Endothelial cell of umbilical vein (primary cell): ENCODE measurements at regions of chr9 and their contacts with region 1.

Region 1: GRCh38 chr9:90914868-90915483 is 113.4 kb downstream of the SYK start:
- DNase-seq: peak; percentile 62
- H3K4me3 ChIP-seq: no peak overlapping the region
- H3K27ac ChIP-seq: no peak overlapping the region
- H3K4me1 ChIP-seq: no peaks in the 10 kb centered on the region
- H3K27me3 ChIP-seq: peaks cover 0 to 1% of the 10 kb centered on the region in 2 experiments
- CTCF ChIP-seq: peak; percentile 80 to 89
- POLR2A ChIP-seq: no peak

Region 2: DNA sequence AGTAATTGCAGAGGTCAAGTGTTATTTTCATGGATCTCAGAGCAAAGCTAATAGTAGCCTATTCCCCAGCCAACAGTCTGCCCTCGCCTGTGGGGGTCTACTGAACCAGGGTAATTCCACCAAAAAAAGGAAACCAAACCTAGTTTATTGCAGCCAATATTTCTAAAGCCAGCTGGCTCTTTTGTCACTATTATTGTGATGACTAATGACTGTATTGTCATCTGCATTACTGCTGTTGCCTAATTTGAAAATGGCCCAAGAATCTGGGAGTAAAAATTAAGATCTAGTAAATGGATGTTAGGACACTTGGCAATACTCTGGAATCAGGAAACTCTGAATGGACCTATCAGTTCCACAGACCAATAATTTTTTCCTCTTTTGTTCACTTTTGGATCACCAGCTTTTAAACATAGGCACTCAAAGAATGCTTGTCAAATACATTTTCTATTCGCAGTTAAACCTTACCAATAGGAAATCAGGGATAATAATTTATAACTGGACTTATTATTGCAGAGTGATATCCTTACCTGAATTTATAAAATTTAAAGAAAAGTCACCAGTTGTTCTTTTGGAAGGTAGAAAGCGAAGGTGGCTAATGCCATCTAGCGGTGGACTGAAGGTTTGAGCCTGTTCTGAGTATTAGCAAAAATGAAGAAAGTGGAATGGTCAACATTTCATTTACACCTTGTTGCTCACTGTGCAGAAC is 44.2 kb before region 1 on chr9:
- CTCF ChIA-PET with region 1: no interaction called
- POLR2A ChIA-PET with region 1: no interaction called
- dilution Hi-C with region 1: no loop called
- intact Hi-C with region 1: no loop called
- DNase-seq: peak; percentile 32
- H3K4me3 ChIP-seq: no peak overlapping the region
- H3K27ac ChIP-seq: no peak overlapping the region
- H3K4me1 ChIP-seq: no peaks in the 10 kb centered on the region
- H3K27me3 ChIP-seq: no peaks in the 10 kb centered on the region
- CTCF ChIP-seq: peak; percentile 63 to 65
- POLR2A ChIP-seq: no peak

Region 3: DNA sequence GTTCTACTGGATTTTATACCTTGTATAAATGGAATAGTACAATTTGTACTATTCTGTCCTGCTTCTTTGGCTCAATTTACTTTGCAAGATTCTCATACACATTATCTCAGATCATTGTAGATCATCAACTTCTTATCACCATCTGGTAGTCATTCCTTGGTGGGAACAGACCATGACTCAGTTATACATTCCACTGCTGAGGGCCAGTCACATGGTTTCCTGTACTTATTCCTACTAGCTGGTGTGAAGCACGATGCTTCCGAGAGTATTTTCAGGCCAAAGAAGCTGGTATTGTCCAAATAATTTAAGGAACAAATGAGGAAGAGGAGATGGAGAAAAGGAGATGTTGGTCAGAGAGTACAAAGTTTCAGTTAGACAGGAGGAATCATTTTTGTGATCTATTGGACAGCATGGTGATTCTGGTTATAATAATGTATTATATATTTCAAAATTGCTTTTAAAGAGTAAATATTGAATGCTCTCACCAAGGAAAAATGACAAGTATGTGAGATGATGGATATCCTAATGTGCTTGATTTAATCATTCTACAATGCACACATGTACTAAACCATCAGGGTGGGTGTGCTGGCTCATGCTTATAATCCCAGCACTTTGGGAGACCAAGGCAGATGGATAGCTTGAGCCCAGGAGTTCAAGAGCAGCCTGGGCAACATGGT is 10.7 kb after region 1 on chr9:
- CTCF ChIA-PET with region 1: interaction called, 19 read pairs
- POLR2A ChIA-PET with region 1: no interaction called
- dilution Hi-C with region 1: no loop called
- intact Hi-C with region 1: no loop called
- DNase-seq: peak; percentile 20
- H3K4me3 ChIP-seq: no peak overlapping the region
- H3K27ac ChIP-seq: no peak overlapping the region
- H3K4me1 ChIP-seq: peaks cover 2% of the 10 kb centered on the region
- H3K27me3 ChIP-seq: no peaks in the 10 kb centered on the region
- CTCF ChIP-seq: no peak
- POLR2A ChIP-seq: no peak

Region 4: DNA sequence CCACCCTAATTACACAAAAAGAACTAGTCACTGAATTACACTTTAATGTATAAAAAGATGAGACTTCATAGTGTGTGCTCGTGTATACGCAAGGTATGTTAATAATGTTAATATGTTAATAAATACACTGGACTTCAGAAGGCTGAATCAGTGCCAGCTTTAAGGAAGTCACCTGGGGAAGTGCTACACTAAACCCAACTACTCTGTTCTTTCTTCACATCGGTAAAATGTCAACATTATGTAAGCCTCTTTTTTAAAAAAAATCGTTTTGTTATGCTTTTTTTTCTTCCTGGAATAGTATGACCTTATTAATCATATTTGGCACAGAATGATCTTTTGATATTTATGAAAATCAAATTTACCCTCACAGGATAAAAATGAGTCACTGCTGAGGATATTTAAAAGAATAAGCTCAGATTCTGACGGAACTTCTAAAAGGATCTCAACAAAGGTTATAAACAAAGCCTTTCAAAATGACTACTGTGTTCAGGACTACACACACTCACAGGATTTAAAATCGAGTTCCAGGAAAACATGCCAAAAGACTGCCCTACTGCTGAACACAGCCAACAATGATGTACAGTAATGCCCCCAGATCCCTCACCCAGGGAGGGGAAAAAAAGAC is 370.9 kb after region 1 on chr9:
- CTCF ChIA-PET with region 1: interaction called, 4 read pairs
- POLR2A ChIA-PET with region 1: no interaction called
- dilution Hi-C with region 1: no loop called
- intact Hi-C with region 1: loop called (anchors 1 kb)
- DNase-seq: peak; percentile 77
- H3K4me3 ChIP-seq: no peak overlapping the region
- H3K27ac ChIP-seq: peak overlapping the region; percentile 63
- H3K4me1 ChIP-seq: peaks cover 12% of the 10 kb centered on the region
- H3K27me3 ChIP-seq: no peaks in the 10 kb centered on the region
- CTCF ChIP-seq: no peak
- POLR2A ChIP-seq: no peak

Region 5: DNA sequence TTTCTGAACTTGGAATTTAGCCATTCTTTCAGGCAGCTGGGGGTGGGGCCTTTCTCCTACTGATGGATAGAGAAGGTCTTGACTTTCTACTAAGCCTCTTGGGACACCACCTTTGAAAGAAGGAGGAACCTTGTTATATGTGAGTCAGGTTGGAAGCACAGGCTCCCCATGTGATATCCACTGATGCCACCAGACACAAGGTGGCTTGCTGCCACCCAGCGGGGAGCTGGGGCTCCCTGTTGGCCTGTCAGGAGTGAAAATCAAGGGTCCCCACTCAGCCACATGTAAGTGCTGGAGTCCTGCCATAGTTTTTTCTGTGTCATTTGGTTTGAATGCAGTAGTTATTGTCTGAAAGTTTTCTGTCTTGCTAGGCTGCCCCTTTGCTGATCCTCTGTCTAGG is 761.1 kb after region 1 on chr9:
- CTCF ChIA-PET with region 1: interaction called, 48 read pairs
- POLR2A ChIA-PET with region 1: no interaction called
- dilution Hi-C with region 1: no loop called
- intact Hi-C with region 1: loop called (anchors 1 kb)
- DNase-seq: no peak
- H3K4me3 ChIP-seq: no peak overlapping the region
- H3K27ac ChIP-seq: no peak overlapping the region
- H3K4me1 ChIP-seq: no peaks in the 10 kb centered on the region
- H3K27me3 ChIP-seq: no peaks in the 10 kb centered on the region
- CTCF ChIP-seq: no peak
- POLR2A ChIP-seq: no peak

Region 6: DNA sequence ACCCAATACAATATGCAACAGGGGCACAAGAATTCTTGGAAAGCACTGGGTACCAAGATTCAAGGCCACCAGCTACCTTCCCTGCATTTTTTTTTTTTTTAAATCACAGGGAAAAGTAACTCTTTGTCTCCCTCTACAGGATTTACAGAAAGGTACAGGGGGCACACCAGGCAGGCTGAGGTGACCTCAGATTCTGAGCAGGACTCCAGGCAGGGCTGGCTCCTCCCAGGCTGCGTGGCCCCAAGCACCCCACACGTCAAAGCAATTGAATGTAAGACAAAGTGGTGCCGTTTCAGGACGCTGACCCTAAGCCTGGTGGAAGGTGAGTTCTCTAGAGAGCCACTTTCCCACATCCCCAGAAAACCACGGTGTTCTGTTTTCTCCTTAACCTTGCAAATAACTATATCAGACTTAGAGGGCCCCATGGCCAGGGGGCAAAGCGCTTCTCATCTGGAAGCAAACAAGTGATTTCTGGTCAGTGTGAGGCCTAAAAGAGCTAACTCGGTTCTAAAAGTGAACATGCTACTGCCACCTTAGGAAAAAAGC is 812.4 kb after region 1 on chr9:
- CTCF ChIA-PET with region 1: interaction called, 187 read pairs
- POLR2A ChIA-PET with region 1: no interaction called
- dilution Hi-C with region 1: no loop called
- intact Hi-C with region 1: loop called (anchors 1 kb)
- DNase-seq: peak; percentile 50
- H3K4me3 ChIP-seq: no peak overlapping the region
- H3K27ac ChIP-seq: no peak overlapping the region
- H3K4me1 ChIP-seq: no peaks in the 10 kb centered on the region
- H3K27me3 ChIP-seq: no peaks in the 10 kb centered on the region
- CTCF ChIP-seq: peak; percentile 62 to 64
- POLR2A ChIP-seq: no peak

Region 7: DNA sequence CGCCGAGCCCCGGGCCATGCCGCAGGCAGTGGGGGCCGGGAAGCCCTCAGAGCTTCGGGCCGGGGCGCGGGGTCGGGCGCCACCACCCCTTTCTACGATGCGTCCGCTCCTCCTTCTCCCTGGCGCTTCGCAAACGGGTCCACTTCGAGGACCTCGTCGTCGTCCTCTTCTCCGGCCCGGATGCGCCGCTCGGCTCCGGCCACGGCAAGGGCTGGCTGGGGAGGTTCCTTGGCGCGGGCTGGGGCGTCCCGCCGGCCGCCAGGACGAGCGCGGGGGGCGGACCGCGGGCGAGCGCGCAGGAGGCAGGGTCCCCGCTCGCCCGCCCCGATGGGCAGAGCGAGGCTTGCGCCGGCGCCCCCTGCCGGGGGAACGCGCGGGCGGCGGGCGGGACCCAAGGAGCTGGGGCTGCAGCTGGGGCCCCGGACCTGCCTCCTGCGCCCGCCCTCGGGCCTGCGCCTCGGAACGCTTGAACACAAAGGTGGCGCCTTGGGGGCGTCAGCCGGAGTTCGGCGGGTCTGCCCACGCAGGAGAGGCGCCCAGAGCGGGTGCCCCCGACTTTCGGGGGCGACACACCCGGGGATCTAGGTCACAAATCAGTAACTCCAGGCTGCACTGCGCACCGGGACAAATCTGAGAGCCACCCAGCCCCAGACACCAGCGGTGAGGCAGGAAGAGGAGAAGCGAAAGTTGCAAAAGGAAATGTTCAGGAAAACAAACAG is 1035.1 kb after region 1 on chr9 and contains the start of gene ROR2:
- CTCF ChIA-PET with region 1: interaction called, 38 read pairs
- POLR2A ChIA-PET with region 1: no interaction called
- dilution Hi-C with region 1: no loop called
- intact Hi-C with region 1: loop called (anchors 1 kb)
- DNase-seq: peak; percentile 7
- H3K4me3 ChIP-seq: peak within 1 kb of the TSS in 2 of 3 experiments; percentile 4 to 9
- H3K27ac ChIP-seq: no peak within 1 kb of the TSS
- H3K4me1 ChIP-seq: no peaks in the 10 kb centered on the region
- H3K27me3 ChIP-seq: peaks cover 35 to 67% of the 10 kb centered on the region in 2 experiments
- CTCF ChIP-seq: peak; percentile 52 to 57
- POLR2A ChIP-seq: no peak
- total RNA-seq, gene ROR2: not detected in 2 replicates